ENCODE measurements at regions of chr5 and their contacts with region 1.

Region 1: DNA sequence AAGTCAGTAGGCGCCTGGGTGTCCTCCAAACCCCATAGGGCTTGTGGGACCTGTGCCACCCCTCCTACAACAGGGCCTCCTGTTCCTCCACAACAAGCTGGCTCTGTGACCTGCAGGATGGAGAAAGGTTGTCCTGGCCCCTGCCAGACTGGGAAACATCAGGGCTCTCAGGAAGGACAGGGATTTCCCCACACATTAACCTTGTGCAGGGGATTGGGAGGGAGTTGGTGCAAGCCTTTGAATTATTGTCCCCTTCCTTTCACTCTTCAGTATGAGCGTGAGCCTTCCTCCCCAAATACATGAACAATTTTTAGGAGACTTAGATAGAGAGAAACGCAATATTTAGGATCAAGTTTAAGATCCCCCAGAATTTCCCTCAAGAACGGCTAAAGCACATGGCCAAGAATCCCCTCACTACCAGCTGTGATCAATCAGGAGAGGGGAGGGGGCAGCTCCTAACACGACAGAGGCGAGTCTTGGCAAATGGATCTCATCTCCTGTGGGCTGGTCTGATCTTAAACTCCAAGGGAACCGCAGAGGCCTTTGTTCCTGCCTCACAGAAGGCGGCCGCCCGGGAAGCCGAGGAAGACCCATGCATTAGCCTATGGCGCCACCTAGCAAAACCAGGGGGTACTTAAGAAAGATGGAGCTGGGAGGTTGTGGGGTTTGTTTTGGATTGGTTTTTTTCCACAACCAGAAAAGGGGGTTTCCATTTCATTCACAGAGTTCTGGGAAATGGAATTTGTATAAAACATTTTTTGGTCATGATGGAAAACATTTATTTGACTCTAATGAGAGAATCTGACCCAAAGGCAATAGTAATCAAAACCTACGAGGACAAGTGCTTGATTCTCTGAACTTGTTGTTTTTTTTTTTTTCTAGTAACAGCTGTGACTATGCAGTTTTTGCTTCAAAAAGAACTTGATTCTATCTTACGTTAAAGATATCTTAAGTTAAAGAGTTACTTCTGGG is 36.1 kb upstream of the OSMR start:
- DNase-seq: peak; percentile 63
- ATAC-seq: peak; percentile 65
- H3K4me3 Mint-ChIP-seq: no peak overlapping the region
- H3K27ac Mint-ChIP-seq: no peak overlapping the region
- H3K4me1 Mint-ChIP-seq: no peaks in the 10 kb centered on the region
- H3K27me3 Mint-ChIP-seq: peaks cover 10% of the 10 kb centered on the region

Region 2: DNA sequence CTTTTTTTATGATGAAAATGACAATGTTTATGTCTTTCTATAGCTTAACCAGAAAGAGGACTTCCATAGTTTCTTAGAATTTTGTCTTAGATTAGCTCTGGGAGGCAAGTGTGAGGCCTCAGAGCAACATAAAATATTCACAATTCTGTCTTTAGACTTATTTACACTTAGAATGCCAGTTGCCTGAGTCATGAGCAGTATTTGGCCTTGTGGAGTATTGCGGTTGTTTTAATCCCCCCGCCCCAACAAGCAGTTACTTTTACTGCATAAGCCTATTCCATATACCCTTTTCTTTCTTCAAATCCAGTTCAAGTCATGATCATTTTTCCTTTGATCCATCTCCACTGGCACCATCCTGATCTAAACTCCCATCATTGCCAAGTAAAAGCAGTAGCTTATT is 749.3 kb before region 1 on chr5:
- CTCF ChIA-PET with region 1: no interaction called
- POLR2A ChIA-PET with region 1: no interaction called
- DNase-seq: no peak
- ATAC-seq: no peak
- H3K4me3 Mint-ChIP-seq: no peak overlapping the region
- H3K27ac Mint-ChIP-seq: no peak overlapping the region
- H3K4me1 Mint-ChIP-seq: no peaks in the 10 kb centered on the region
- H3K27me3 Mint-ChIP-seq: no peaks in the 10 kb centered on the region

Region 3: GRCh38 chr5:38382898-38383297 is 426.8 kb before region 1 on chr5:
- CTCF ChIA-PET with region 1: interaction called, 26 read pairs
- POLR2A ChIA-PET with region 1: no interaction called
- DNase-seq: peak; percentile 61
- ATAC-seq: peak; percentile 87
- H3K4me3 Mint-ChIP-seq: no peak overlapping the region
- H3K27ac Mint-ChIP-seq: no peak overlapping the region
- H3K4me1 Mint-ChIP-seq: peaks cover 7% of the 10 kb centered on the region
- H3K27me3 Mint-ChIP-seq: peaks cover 24% of the 10 kb centered on the region

Region 4: DNA sequence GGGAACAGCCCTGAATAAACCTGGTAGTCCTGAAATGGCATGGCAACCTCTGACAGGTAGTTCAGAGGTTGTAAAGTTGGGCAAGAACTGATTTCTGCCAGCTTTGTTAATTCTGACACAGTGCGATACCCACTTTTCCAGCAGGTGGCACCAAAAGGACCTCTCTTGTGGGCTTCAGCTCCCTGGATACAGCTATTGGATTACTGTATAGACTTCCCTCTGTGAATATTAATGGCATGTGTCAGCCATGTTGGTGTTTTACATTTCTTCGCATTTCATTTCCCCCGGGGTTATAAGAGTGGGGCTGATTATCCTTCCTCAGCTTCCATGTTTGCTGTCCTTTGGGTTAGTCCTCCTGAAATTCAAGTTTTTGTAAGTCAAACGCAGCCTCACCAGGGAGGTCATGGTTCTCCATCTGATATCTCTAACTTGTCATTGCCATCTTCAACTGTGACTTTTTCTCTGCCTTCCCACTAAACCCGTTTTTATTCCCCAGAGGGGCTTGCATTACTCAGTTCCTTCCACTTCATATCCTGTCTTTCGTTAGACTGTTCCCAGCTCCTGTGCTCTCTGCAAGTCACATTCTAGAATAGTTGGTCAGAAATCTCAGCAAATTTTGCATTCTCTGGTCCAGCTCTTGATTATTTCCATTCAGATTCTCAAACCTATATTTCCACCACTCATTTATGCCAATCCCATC is 388.8 kb before region 1 on chr5:
- CTCF ChIA-PET with region 1: interaction called, 34 read pairs
- POLR2A ChIA-PET with region 1: no interaction called
- DNase-seq: peak; percentile 47
- ATAC-seq: no peak
- H3K4me3 Mint-ChIP-seq: no peak overlapping the region
- H3K27ac Mint-ChIP-seq: no peak overlapping the region
- H3K4me1 Mint-ChIP-seq: no peaks in the 10 kb centered on the region
- H3K27me3 Mint-ChIP-seq: peaks cover 26% of the 10 kb centered on the region

Region 5: DNA sequence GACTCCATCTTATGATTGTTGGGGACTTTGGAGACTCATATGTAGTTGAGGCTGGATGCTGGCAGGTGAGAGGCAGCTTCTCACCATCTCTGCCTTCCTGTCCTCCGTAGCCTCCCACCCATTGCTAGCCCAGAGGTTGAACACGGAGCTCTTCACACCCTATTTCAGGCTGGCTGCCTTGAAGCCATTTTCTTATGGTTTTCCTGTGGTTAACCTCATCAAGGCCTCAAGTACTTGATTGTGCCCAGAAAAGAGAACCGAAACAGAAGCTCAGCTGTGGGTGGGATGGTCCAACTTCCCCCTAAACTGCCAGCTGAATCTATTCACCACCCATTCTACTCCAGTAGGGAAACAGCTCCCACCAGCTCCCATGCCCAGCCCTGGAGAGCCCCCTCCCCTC is 356.2 kb before region 1 on chr5:
- CTCF ChIA-PET with region 1: interaction called, 12 read pairs
- POLR2A ChIA-PET with region 1: no interaction called
- DNase-seq: peak; percentile 83
- ATAC-seq: peak; percentile 98
- H3K4me3 Mint-ChIP-seq: peak overlapping the region; percentile 45
- H3K27ac Mint-ChIP-seq: peak overlapping the region; percentile 50
- H3K4me1 Mint-ChIP-seq: peaks cover 21% of the 10 kb centered on the region
- H3K27me3 Mint-ChIP-seq: peaks cover 81% of the 10 kb centered on the region

Region 6: GRCh38 chr5:38853753-38854463 is 44.2 kb after region 1 on chr5:
- CTCF ChIA-PET with region 1: no interaction called
- POLR2A ChIA-PET with region 1: no interaction called
- DNase-seq: no peak
- ATAC-seq: no peak
- H3K4me3 Mint-ChIP-seq: no peak overlapping the region
- H3K27ac Mint-ChIP-seq: no peak overlapping the region
- H3K4me1 Mint-ChIP-seq: no peaks in the 10 kb centered on the region
- H3K27me3 Mint-ChIP-seq: peaks cover 14% of the 10 kb centered on the region

Measured in activated CD8-positive, alpha-beta T cell treated with anti-CD3 and anti-CD28 coated beads, Interleukin-2, amount 10 ng/mL, durations not matched to agents 7 days and 5 days (primary cell).